Transverse colon (tissue), 4 donors: ENCODE measurements at regions of chr20 and their contacts with region 1.

Region 1: GRCh38 chr20:50569864-50570836 is 60.0 kb downstream of the PTPN1 start:
- DNase-seq: no peak
- H3K4me3 ChIP-seq: no peak overlapping the region
- H3K27ac ChIP-seq: no peak overlapping the region
- H3K4me1 ChIP-seq: peaks cover 0 to 11% (median 8%) of the 10 kb centered on the region in 4 donors
- H3K27me3 ChIP-seq: no peaks in the 10 kb centered on the region
- CTCF ChIP-seq: peak in 1 of 5 experiments; percentile 20
- EP300 ChIP-seq: no peak
- POLR2A ChIP-seq: no peak

Region 2: GRCh38 chr20:50471204-50471610 is 98.9 kb before region 1 on chr20:
- in situ Hi-C with region 1: loop called (anchors 5 to 10 kb)
- intact Hi-C with region 1: no loop called
- DNase-seq: no peak
- H3K4me3 ChIP-seq: no peak overlapping the region
- H3K27ac ChIP-seq: peak overlapping the region in 1 of 4 donors; percentile 29
- H3K4me1 ChIP-seq: peaks cover 0 to 22% (median 8%) of the 10 kb centered on the region in 4 donors
- H3K27me3 ChIP-seq: no peaks in the 10 kb centered on the region
- CTCF ChIP-seq: no peak
- EP300 ChIP-seq: no peak
- POLR2A ChIP-seq: no peak

Region 3: DNA sequence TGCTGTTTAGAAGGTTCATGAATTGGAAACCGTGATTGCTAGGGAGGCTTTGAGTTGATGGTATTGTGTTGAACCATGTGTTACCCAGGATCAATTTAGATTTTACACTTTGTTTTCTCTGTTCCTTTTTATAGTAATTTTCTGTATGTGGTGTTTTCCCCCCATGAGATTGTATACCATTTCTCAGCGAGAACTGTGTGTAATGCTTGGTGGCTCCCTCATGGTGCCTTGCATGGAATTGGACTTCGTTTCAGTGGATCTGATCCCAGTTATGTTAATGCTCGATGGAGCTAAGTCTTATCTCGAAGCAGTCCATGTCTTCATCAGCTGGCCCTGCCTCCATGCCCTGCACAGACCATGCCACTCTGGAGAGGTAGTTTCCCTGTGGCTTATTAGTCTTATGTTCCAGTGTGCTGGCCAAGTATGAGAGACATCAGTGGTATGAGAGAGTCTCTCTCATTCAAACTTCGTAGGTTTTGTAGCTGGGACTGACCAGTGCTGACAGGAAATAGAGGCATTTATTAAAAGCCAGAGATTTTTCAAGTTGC is 41.3 kb before region 1 on chr20:
- in situ Hi-C with region 1: no loop called
- intact Hi-C with region 1: loop called (anchors 2 kb)
- DNase-seq: no peak
- H3K4me3 ChIP-seq: no peak overlapping the region
- H3K27ac ChIP-seq: peak overlapping the region in 1 of 4 donors; percentile 76
- H3K4me1 ChIP-seq: peaks cover 39 to 78% (median 45%) of the 10 kb centered on the region in 4 donors
- H3K27me3 ChIP-seq: no peaks in the 10 kb centered on the region
- CTCF ChIP-seq: no peak
- EP300 ChIP-seq: no peak
- POLR2A ChIP-seq: no peak